PC-3 (cell line): ENCODE measurements at regions of chr6 and their contacts with region 1.

Region 1: DNA sequence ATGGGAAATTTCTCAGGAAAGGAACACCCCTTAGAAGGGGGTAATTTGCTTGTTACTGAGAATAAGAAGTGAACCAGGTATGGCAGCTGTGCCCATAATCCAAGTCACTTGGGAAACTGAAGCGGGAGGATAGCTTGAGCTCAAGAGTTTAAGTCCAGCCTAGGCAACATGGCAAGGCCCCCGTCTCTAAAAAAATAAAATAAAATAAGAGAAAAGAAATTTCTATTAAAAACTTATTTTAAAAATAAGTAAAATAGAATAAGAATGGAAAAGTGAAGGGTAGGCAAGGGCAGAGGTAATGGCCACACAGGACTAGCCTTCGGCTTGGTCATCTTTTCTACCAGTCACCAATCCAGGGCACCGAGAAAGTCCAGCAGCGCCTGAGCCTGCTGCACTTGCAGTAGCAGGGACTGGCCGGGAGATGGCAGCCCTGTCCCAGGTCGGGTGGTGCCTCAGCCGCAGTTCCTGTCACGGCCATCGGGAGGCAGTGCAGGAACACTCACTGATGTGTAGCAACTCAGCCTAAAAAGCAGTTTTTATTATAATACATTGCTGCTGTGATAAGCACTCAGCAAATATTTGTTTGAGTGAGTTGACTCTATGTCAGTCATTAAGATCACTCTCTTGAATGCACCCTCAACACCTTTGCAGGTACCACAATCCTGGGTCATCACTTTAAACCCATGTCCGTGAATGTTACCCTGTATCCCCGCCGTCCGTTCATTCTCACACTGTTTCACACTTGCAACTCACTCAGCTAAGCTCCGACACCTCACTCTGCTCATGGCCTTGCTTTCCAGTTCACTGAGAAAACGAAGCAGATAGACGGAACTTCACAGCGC is 23.2 kb upstream of the GCM1 start:
- DNase-seq: peak; percentile 89
- ATAC-seq: peak; percentile 70
- H3K4me3 ChIP-seq: no peak overlapping the region
- H3K27ac ChIP-seq: no peak overlapping the region
- H3K4me1 ChIP-seq: peaks cover 16% of the 10 kb centered on the region
- H3K27me3 ChIP-seq: no peaks in the 10 kb centered on the region
- CTCF ChIP-seq: peak; percentile 100

Region 2: DNA sequence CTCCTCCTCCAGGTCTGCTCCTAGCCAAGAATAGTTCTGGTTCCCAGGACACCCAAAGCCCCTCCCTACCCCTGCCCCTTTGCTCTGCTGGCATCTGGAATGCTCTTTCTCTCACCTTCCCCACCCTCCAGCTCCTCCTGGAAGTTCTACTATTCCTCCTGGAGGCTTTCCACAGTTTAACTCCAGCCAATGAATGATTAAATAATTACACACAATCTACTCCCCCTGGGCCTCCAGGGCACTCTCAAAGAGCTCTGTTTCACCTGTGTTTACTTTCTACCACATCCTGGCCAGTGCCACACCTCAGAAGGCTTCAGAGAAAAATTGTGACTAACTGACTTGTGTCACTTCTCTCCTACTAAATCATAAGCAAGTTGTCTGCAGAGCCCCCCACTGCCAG is 59.4 kb before region 1 on chr6:
- CTCF ChIA-PET with region 1: interaction called, 6 read pairs
- POLR2A ChIA-PET with region 1: no interaction called
- intact Hi-C with region 1: loop called (anchors 1 kb)
- DNase-seq: peak; percentile 97
- ATAC-seq: peak; percentile 93
- H3K4me3 ChIP-seq: peak overlapping the region; percentile 52; the same call in 1 of the 2 replicates
- H3K27ac ChIP-seq: peak overlapping the region; percentile 96
- H3K4me1 ChIP-seq: peaks cover 38% of the 10 kb centered on the region
- H3K27me3 ChIP-seq: no peaks in the 10 kb centered on the region
- CTCF ChIP-seq: no peak

Region 3: DNA sequence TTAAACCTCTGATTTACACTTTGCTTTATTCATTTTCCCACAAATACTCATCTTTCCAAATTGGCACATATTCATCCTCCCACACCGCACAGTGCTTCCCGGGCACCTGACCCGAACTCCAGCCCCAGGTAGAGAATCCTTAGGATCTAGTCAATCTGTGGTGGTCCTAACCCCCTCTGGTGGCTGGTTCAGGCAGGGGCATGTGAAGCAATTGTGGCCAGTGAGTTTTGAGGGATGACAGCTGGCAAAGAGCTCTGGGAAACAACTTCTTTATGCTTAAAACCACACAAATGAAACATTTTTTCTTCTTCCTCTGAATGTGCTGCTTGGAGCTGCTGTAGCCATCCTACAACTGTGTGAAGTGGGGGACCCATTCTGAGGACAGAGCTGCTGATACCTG is 122.3 kb after region 1 on chr6:
- CTCF ChIA-PET with region 1: no interaction called
- POLR2A ChIA-PET with region 1: no interaction called
- intact Hi-C with region 1: loop called (anchors 10 kb)
- DNase-seq: no peak
- ATAC-seq: no peak
- H3K4me3 ChIP-seq: no peak overlapping the region
- H3K27ac ChIP-seq: no peak overlapping the region
- H3K4me1 ChIP-seq: peaks cover 7% of the 10 kb centered on the region; the same call in 1 of the 2 replicates
- H3K27me3 ChIP-seq: no peaks in the 10 kb centered on the region
- CTCF ChIP-seq: peak; percentile 62

Region 4: GRCh38 chr6:53410508-53411258 is 238.9 kb after region 1 on chr6:
- CTCF ChIA-PET with region 1: interaction called, 4 read pairs
- POLR2A ChIA-PET with region 1: no interaction called
- intact Hi-C with region 1: loop called (anchors 1 kb)
- DNase-seq: peak; percentile 71
- ATAC-seq: peak; percentile 94
- H3K4me3 ChIP-seq: no peak overlapping the region
- H3K27ac ChIP-seq: no peak overlapping the region
- H3K4me1 ChIP-seq: peaks cover 3% of the 10 kb centered on the region; the same call in 1 of the 2 replicates
- H3K27me3 ChIP-seq: no peaks in the 10 kb centered on the region
- CTCF ChIP-seq: peak; percentile 93

Region 5: GRCh38 chr6:53458105-53458866 is 286.5 kb after region 1 on chr6:
- CTCF ChIA-PET with region 1: no interaction called
- POLR2A ChIA-PET with region 1: no interaction called
- intact Hi-C with region 1: no loop called
- DNase-seq: no peak
- ATAC-seq: no peak
- H3K4me3 ChIP-seq: no peak overlapping the region
- H3K27ac ChIP-seq: no peak overlapping the region
- H3K4me1 ChIP-seq: no peaks in the 10 kb centered on the region
- H3K27me3 ChIP-seq: no peaks in the 10 kb centered on the region
- CTCF ChIP-seq: no peak

Region 6: GRCh38 chr6:53484476-53485280 is 312.9 kb after region 1 on chr6:
- CTCF ChIA-PET with region 1: interaction called, 4 read pairs
- POLR2A ChIA-PET with region 1: no interaction called
- intact Hi-C with region 1: loop called (anchors 1 kb)
- DNase-seq: peak; percentile 87
- ATAC-seq: peak; percentile 43
- H3K4me3 ChIP-seq: peak overlapping the region; percentile 32; the same call in 1 of the 2 replicates
- H3K27ac ChIP-seq: no peak overlapping the region
- H3K4me1 ChIP-seq: peaks cover 12% of the 10 kb centered on the region; the same call in 1 of the 2 replicates
- H3K27me3 ChIP-seq: no peaks in the 10 kb centered on the region
- CTCF ChIP-seq: peak; percentile 95